CD14-positive monocyte (primary cell): ENCODE measurements at regions of chr1 and their contacts with region 1.

Region 1: DNA sequence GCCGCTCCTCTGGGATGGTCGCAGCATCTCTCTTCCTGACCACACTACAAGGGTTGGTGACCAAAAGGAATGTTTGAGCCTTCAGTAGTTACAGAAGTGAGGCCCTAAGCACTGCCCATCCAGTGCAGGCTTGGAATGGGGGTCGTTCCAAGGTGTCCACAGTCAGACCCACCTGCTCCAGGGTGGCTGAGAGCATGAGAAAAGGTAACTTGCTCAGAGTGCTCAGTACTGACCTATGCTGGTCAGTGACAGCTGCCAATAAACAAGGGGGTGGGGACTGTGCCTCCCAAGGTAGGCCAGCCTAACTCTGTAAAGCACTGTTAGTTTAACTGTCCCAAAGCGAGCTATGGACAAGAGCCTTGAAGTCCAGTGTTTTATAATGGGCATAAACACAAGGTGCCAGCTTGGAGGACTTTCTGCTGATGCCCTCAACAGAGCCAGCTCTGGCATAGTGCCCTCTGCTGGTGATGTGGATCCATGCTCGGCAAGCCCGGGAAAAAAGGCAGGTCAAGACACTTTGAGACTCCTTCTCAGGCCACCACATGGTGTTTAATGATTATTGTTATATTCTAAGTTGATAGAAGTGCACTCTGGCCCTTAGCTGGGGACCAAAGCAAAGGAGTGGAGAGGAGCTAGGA is 78.1 kb upstream of the DNAH14 start:
- DNase-seq: peak; percentile 14 to 25 (median 20)
- H3K4me3 ChIP-seq: no peak overlapping the region
- H3K4me3 Mint-ChIP-seq: no peak overlapping the region
- H3K27ac ChIP-seq: no peak overlapping the region
- H3K27ac Mint-ChIP-seq: peak overlapping the region in 2 of 7 donors; percentile 8 to 19
- H3K4me1 ChIP-seq: no peaks in the 10 kb centered on the region
- H3K4me1 Mint-ChIP-seq: no peaks in the 10 kb centered on the region
- H3K27me3 ChIP-seq: no peaks in the 10 kb centered on the region
- H3K27me3 Mint-ChIP-seq: peaks cover 2 to 5% (median 2%) of the 10 kb centered on the region in 3 donors
- CTCF ChIP-seq: peak; percentile 74

Region 2: GRCh38 chr1:224513787-224514209 is 337.5 kb before region 1 on chr1:
- intact Hi-C with region 1: loop called (anchors 5 to 10 kb)
- DNase-seq: peak; percentile 68 to 71 (median 69)
- H3K4me3 ChIP-seq: no peak overlapping the region
- H3K4me3 Mint-ChIP-seq: no peak overlapping the region
- H3K27ac ChIP-seq: no peak overlapping the region
- H3K27ac Mint-ChIP-seq: no peak overlapping the region
- H3K4me1 ChIP-seq: peaks cover 0 to 6% of the 10 kb centered on the region in 2 donors
- H3K4me1 Mint-ChIP-seq: peaks cover 18% of the 10 kb centered on the region
- H3K27me3 ChIP-seq: no peaks in the 10 kb centered on the region
- H3K27me3 Mint-ChIP-seq: peaks cover 0 to 2% (median 0%) of the 10 kb centered on the region in 3 donors
- CTCF ChIP-seq: peak; percentile 93

Region 3: GRCh38 chr1:224521904-224522734 is 329.2 kb before region 1 on chr1:
- intact Hi-C with region 1: loop called (anchors 5 to 10 kb)
- DNase-seq: no peak
- H3K4me3 ChIP-seq: no peak overlapping the region
- H3K4me3 Mint-ChIP-seq: no peak overlapping the region
- H3K27ac ChIP-seq: no peak overlapping the region
- H3K27ac Mint-ChIP-seq: no peak overlapping the region
- H3K4me1 ChIP-seq: no peaks in the 10 kb centered on the region
- H3K4me1 Mint-ChIP-seq: peaks cover 2% of the 10 kb centered on the region
- H3K27me3 ChIP-seq: no peaks in the 10 kb centered on the region
- H3K27me3 Mint-ChIP-seq: peaks cover 0 to 3% (median 2%) of the 10 kb centered on the region in 3 donors
- CTCF ChIP-seq: no peak

Region 4: DNA sequence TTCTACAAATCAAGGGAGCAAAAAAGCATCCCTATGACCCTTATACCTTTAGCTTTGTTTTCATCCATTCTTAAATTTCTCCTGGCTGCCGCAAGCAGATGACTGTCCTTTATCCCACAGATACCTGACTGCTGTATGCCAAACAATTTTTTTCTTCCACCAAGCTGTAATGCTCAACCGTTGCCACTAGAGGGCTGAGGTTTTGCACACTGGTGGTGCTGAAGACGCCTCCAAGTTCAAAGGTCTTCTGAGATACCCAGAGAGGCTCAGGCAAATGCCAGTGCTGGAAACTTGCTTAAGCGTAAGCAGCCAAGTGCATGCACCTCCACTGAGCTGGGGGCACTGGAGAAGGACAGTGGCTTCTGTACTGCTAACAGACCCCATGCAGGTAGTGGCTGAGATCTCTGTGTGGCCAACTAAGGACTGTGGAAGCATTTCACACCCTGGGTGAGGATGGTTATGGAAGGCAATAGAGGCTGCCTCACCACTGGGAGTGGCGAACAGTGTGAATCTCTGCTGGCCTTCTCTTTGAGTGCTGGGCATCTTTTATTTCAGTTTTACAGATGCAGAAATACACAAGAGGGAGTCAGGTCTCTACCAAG is 206.7 kb before region 1 on chr1:
- intact Hi-C with region 1: loop called in 1 of 2 experiments (anchors 10 kb)
- DNase-seq: peak; percentile 15 to 40 (median 18)
- H3K4me3 ChIP-seq: no peak overlapping the region
- H3K4me3 Mint-ChIP-seq: no peak overlapping the region
- H3K27ac ChIP-seq: no peak overlapping the region
- H3K27ac Mint-ChIP-seq: no peak overlapping the region
- H3K4me1 ChIP-seq: no peaks in the 10 kb centered on the region
- H3K4me1 Mint-ChIP-seq: peaks cover 5% of the 10 kb centered on the region
- H3K27me3 ChIP-seq: no peaks in the 10 kb centered on the region
- H3K27me3 Mint-ChIP-seq: peaks cover 7 to 10% (median 7%) of the 10 kb centered on the region in 3 donors
- CTCF ChIP-seq: peak; percentile 84

Region 5: DNA sequence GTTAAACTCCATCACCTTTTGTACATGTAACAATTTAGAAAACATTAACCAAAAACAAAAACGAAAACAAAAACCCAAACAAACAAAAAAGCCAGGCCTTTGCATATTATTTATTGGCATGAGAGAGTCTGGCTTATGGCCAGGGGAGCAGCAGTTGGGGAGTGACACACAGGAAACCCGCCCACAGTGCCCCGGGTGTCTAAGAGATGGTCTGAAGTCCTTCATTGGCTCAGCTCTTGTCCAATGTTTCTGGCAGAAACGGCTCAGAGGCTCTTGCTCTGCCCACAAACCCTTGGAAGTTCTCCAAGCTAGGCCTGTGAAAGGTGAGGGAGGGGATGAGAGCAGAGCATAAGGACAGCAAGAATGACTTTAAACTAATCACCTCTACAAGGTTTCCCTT is 103.8 kb before region 1 on chr1:
- intact Hi-C with region 1: no loop called
- DNase-seq: no peak
- H3K4me3 ChIP-seq: no peak overlapping the region
- H3K4me3 Mint-ChIP-seq: no peak overlapping the region
- H3K27ac ChIP-seq: no peak overlapping the region
- H3K27ac Mint-ChIP-seq: no peak overlapping the region
- H3K4me1 ChIP-seq: no peaks in the 10 kb centered on the region
- H3K4me1 Mint-ChIP-seq: peaks cover 2% of the 10 kb centered on the region
- H3K27me3 ChIP-seq: no peaks in the 10 kb centered on the region
- H3K27me3 Mint-ChIP-seq: peaks cover 1 to 3% (median 2%) of the 10 kb centered on the region in 3 donors
- CTCF ChIP-seq: no peak

Region 6: GRCh38 chr1:224914292-224914900 is 63.1 kb after region 1 on chr1:
- intact Hi-C with region 1: no loop called
- DNase-seq: no peak
- H3K4me3 ChIP-seq: no peak overlapping the region
- H3K4me3 Mint-ChIP-seq: no peak overlapping the region
- H3K27ac ChIP-seq: no peak overlapping the region
- H3K27ac Mint-ChIP-seq: no peak overlapping the region
- H3K4me1 ChIP-seq: no peaks in the 10 kb centered on the region
- H3K4me1 Mint-ChIP-seq: no peaks in the 10 kb centered on the region
- H3K27me3 ChIP-seq: no peaks in the 10 kb centered on the region
- H3K27me3 Mint-ChIP-seq: peaks cover 0 to 2% (median 2%) of the 10 kb centered on the region in 3 donors
- CTCF ChIP-seq: no peak